GM10248 (cell line): ENCODE measurements at regions of chr3 and their contacts with region 1.

Region 1: GRCh38 chr3:32177702-32178198 is 60.7 kb upstream of the CMTM8 start:
- DNase-seq: peak; percentile 35
- CTCF ChIP-seq: peak; percentile 75

Region 2: GRCh38 chr3:32154205-32154579 is 23.6 kb before region 1 on chr3:
- CTCF ChIA-PET with region 1: interaction called, 26 read pairs
- POLR2A ChIA-PET with region 1: no interaction called
- DNase-seq: no peak
- CTCF ChIP-seq: peak; percentile 21

Region 3: GRCh38 chr3:32160706-32161214 is 17.0 kb before region 1 on chr3:
- CTCF ChIA-PET with region 1: interaction called, 26 read pairs
- POLR2A ChIA-PET with region 1: no interaction called
- DNase-seq: no peak
- CTCF ChIP-seq: no peak

Region 4: GRCh38 chr3:32842531-32842931 is 664.8 kb after region 1 on chr3:
- CTCF ChIA-PET with region 1: no interaction called
- POLR2A ChIA-PET with region 1: no interaction called
- DNase-seq: no peak
- CTCF ChIP-seq: no peak